ENCODE measurements at regions of chr4 and their contacts with region 1.

Region 1: GRCh38 chr4:48047421-48047844 is 30.9 kb downstream of the NIPAL1 start:
- DNase-seq: peak; percentile 90
- ATAC-seq: peak; percentile 83
- H3K4me3 Mint-ChIP-seq: peak overlapping the region; percentile 47
- H3K27ac Mint-ChIP-seq: peak overlapping the region; percentile 70
- H3K4me1 Mint-ChIP-seq: peaks cover 60% of the 10 kb centered on the region
- H3K27me3 Mint-ChIP-seq: peaks cover 17% of the 10 kb centered on the region

Region 2: GRCh38 chr4:47786958-47787370 is 260.5 kb before region 1 on chr4:
- CTCF ChIA-PET with region 1: no interaction called
- POLR2A ChIA-PET with region 1: no interaction called
- intact Hi-C with region 1: no loop called
- DNase-seq: no peak
- ATAC-seq: no peak
- H3K4me3 Mint-ChIP-seq: no peak overlapping the region
- H3K27ac Mint-ChIP-seq: no peak overlapping the region
- H3K4me1 Mint-ChIP-seq: no peaks in the 10 kb centered on the region
- H3K27me3 Mint-ChIP-seq: peaks cover 6% of the 10 kb centered on the region

Region 3: DNA sequence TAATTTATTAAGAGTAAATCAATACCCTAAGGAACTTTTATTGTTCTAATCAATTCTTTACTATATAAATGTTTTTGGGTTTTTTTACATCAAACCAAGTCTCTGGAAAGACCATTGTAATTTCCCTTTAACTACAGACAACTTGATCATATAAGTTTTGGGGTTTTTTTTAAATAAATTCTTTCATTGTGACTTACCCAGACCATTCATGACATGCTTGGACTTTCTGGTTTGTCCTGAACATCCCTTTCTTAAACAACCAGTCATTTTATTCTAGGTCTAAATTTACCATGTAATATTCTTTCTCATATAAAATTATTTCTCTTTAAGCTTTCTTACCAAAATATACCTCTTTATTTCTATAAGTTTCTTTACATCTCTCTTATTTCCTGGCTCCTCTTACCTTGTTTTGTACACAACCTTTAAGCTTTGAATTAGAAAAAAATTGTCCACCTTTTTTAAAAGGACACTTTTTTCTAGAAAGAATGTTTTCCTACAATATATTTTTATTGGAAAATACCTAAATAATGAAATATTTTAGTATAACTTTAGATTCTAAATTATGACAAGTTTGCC is 39.3 kb before region 1 on chr4:
- CTCF ChIA-PET with region 1: no interaction called
- POLR2A ChIA-PET with region 1: no interaction called
- intact Hi-C with region 1: loop called in 1 of 2 experiments (anchors 1 kb)
- DNase-seq: no peak
- ATAC-seq: no peak
- H3K4me3 Mint-ChIP-seq: no peak overlapping the region
- H3K27ac Mint-ChIP-seq: no peak overlapping the region
- H3K4me1 Mint-ChIP-seq: no peaks in the 10 kb centered on the region
- H3K27me3 Mint-ChIP-seq: peaks cover 3% of the 10 kb centered on the region

Region 4: DNA sequence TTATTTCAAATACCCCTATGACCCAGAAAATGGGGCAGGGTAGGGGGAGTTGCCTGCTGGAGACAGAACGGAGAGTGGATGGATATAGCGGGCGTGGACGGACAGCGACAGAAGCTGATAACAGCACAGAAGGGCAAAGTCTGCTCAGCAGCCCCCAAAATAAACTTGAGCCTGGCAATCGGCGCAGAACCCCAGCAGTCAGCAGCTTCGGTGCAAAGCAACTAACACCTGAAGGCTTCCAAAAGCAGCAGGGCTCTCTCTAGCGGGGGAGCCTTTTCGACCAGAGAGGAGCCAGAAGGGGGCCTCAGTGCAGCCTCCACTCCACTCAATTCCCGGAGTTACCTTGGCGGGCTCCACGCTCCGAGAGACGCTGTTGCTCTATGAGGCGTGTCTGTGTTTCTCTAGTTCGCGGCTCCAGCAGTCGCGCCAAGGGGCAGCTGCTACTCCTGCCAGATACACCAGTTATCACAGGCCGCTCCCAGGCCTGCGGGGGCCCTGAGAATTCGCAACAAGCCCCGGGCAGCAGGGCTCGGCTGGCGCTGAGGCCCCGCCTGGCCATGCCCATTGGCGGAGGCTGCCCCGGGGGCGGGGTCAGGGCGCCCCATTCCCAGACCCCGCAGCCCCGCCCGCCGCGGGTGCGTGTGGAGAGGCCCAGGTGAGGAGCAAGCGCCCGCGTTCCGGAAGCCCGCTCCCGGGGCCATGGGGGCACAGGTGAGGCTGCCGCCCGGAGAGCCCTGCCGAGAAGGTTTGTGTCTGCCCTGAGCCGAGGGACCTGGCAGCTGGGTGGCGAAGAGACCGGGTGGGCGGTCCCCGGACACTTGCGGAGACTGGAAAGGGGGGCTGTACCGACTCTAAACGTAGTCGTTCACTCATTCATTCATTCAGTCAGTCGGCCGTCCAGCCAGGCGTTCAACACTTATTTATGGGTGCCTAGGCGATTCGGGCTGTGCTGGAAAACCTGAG is 31.0 kb before region 1 on chr4 and contains the starts of genes CNGA1 and NIPAL1:
- CTCF ChIA-PET with region 1: interaction called, 12 read pairs
- POLR2A ChIA-PET with region 1: interaction called, 3 read pairs
- intact Hi-C with region 1: loop called in 1 of 2 experiments (anchors 1 kb)
- DNase-seq: peak; percentile 80
- ATAC-seq: peak; percentile 86
- H3K4me3 Mint-ChIP-seq: peak within 1 kb of the TSS; percentile 76
- H3K27ac Mint-ChIP-seq: peak within 1 kb of the TSS; percentile 66
- H3K4me1 Mint-ChIP-seq: peaks cover 29% of the 10 kb centered on the region
- H3K27me3 Mint-ChIP-seq: peaks cover 16% of the 10 kb centered on the region
- total RNA-seq, gene CNGA1: 0.16 to 0.30 TPM
- total RNA-seq, gene NIPAL1: 1.6 to 1.8 TPM

Region 5: GRCh38 chr4:48065587-48066052 is 18.2 kb after region 1 on chr4:
- CTCF ChIA-PET with region 1: interaction called, 12 read pairs
- POLR2A ChIA-PET with region 1: interaction called, 3 read pairs
- intact Hi-C with region 1: loop called (anchors 1 to 2 kb)
- DNase-seq: peak; percentile 22
- ATAC-seq: peak; percentile 94
- H3K4me3 Mint-ChIP-seq: no peak overlapping the region
- H3K27ac Mint-ChIP-seq: no peak overlapping the region
- H3K4me1 Mint-ChIP-seq: peaks cover 23% of the 10 kb centered on the region
- H3K27me3 Mint-ChIP-seq: no peaks in the 10 kb centered on the region

Region 6: GRCh38 chr4:48109413-48110263 is 62.2 kb after region 1 on chr4:
- CTCF ChIA-PET with region 1: interaction called, 11 read pairs
- POLR2A ChIA-PET with region 1: no interaction called
- intact Hi-C with region 1: no loop called
- DNase-seq: no peak
- ATAC-seq: peak; percentile 86
- H3K4me3 Mint-ChIP-seq: no peak overlapping the region
- H3K27ac Mint-ChIP-seq: peak overlapping the region; percentile 65
- H3K4me1 Mint-ChIP-seq: peaks cover 61% of the 10 kb centered on the region
- H3K27me3 Mint-ChIP-seq: no peaks in the 10 kb centered on the region

Region 7: GRCh38 chr4:48499551-48500066 is 452.2 kb after region 1 on chr4:
- CTCF ChIA-PET with region 1: no interaction called
- POLR2A ChIA-PET with region 1: no interaction called
- intact Hi-C with region 1: loop called in 1 of 2 experiments (anchors 10 kb)
- DNase-seq: no peak
- ATAC-seq: peak; percentile 73
- H3K4me3 Mint-ChIP-seq: no peak overlapping the region
- H3K27ac Mint-ChIP-seq: no peak overlapping the region
- H3K4me1 Mint-ChIP-seq: peaks cover 17% of the 10 kb centered on the region
- H3K27me3 Mint-ChIP-seq: no peaks in the 10 kb centered on the region